Tibial artery (tissue), 4 donors: ENCODE measurements at regions of chr2 and their contacts with region 1.

Region 1: GRCh38 chr2:53877556-53877955 is 17.8 kb upstream of the GPR75 start:
- DNase-seq: no peak
- H3K4me3 ChIP-seq: no peak overlapping the region
- H3K27ac ChIP-seq: no peak overlapping the region
- H3K4me1 ChIP-seq: no peaks in the 10 kb centered on the region
- H3K27me3 ChIP-seq: no peaks in the 10 kb centered on the region
- CTCF ChIP-seq: no peak

Region 2: GRCh38 chr2:53632714-53633113 is 244.8 kb before region 1 on chr2:
- intact Hi-C with region 1: no loop called
- DNase-seq: no peak
- H3K4me3 ChIP-seq: no peak overlapping the region
- H3K27ac ChIP-seq: no peak overlapping the region
- H3K4me1 ChIP-seq: peaks cover 0 to 13% (median 0%) of the 10 kb centered on the region in 4 donors
- H3K27me3 ChIP-seq: no peaks in the 10 kb centered on the region
- CTCF ChIP-seq: no peak

Region 3: GRCh38 chr2:53715568-53715967 is 162.0 kb before region 1 on chr2:
- intact Hi-C with region 1: no loop called
- DNase-seq: no peak
- H3K4me3 ChIP-seq: no peak overlapping the region
- H3K27ac ChIP-seq: no peak overlapping the region
- H3K4me1 ChIP-seq: peaks cover 0 to 5% (median 0%) of the 10 kb centered on the region in 4 donors
- H3K27me3 ChIP-seq: no peaks in the 10 kb centered on the region
- CTCF ChIP-seq: peak; percentile 12 to 43

Region 4: DNA sequence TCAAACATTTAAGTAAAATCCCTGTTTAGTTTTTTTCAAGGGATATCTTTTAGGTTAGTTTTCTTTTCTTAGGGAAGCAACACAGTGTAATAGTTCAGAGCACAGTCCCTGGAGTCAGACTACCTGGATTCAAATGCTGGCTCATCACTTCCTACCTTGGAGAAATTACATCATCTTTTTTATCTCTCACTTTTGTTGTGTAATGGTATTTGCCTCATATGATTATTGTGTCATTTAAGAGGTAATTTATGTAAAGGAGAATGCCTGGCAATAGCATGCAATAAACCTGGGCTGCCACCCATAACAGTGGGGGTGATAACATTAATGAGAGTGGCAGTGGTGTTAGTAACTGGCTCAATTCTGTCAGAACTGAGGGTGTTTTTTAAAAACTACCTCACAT is 64.4 kb before region 1 on chr2:
- intact Hi-C with region 1: loop called (anchors 10 kb)
- DNase-seq: no peak
- H3K4me3 ChIP-seq: no peak overlapping the region
- H3K27ac ChIP-seq: no peak overlapping the region
- H3K4me1 ChIP-seq: no peaks in the 10 kb centered on the region
- H3K27me3 ChIP-seq: no peaks in the 10 kb centered on the region
- CTCF ChIP-seq: no peak